Activated T-helper 1 cell treated with anti-CD3 and anti-CD28 coated beads, Interleukin-12 subunit alpha, Interleukin-12 subunit beta, Interleukin-2, Interleukin-4 antibody, amounts not matched to agents 30 ng/mL and 10 ng/mL and 1 ng/mL, durations not matched to agents 14 hours and 24 hours and 36 hours (primary cell): ENCODE measurements at regions of chr20 and their contacts with region 1.

Region 1: DNA sequence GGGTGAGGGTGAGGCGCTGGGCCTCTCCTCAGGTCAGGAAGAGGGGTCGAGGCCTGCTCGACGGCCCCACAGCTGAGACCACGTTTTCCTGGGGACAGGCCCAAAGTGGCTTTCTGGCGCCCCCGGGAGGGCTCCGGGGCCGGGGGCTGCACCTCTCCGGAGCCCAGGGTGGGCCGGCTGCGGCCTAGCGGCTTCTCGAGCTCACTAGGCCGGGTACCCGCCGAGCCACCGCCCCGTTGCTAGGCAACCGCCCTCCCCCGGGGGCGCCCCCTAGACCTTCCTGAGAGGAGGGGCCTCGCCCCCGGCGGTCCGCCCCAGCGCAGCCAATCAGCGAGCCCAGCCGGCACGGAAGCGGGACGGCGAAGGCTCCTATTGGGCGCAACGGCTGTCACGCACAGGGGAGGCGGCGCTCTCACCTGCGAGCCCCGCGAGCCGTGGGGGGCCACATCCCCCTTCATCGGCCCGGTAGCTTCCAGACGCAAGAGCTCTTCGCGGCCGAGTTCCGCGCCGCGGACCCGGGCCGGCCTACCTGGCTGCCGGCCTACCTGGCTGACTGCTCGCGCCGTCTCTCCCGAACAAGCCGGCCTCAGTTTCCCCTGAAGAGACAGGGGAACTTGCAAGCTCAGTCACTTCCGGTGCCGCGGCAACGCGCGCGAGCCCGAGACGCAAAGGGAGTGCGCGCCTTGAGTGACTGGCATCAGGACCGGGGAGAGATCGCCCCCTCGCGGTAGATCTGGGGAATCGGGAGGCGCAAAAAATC is 831 bp upstream of the BCL2L1 start:
- DNase-seq: peak; percentile 97
- H3K4me3 Mint-ChIP-seq: peak overlapping the region; percentile 97
- H3K27ac Mint-ChIP-seq: peak overlapping the region; percentile 93
- H3K4me1 Mint-ChIP-seq: peaks cover 20% of the 10 kb centered on the region
- H3K27me3 Mint-ChIP-seq: no peaks in the 10 kb centered on the region

Region 2: DNA sequence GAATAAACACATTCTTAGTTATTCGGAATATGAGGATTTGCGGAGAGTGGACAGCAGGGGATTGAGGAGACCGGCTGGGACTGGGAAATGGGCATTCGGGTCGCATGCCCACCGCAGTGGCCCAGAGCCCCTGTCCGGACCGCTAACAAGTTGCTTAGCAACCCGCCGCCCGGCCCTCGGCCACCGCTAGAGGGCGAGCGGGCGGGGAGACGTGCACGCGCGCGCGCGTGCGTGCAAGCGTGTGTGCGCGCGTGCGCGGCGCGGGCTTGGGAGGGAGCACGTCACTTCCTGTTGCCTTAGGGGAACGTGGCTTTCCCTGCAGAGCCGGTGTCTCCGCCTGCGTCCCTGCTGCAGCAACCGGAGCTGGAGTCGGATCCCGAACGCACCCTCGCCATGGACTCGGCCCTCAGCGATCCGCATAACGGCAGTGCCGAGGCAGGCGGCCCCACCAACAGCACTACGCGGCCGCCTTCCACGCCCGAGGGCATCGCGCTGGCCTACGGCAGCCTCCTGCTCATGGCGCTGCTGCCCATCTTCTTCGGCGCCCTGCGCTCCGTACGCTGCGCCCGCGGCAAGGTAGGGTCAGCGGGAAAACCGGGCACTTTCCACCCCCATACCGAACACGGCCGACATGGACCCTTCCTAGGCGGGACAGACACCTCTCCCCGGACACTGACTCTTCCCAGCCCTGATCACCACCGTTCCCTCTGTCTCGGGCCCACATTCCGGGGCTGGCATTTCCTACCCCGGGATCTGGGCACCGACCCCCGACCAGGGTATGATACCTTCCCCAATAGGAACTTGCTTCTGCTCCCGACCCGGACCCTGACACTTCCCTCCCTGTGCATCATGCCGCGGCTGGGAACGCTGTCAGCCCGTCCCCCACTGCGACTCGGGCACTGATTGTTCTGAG is 209.1 kb before region 1 on chr20 and contains the start of gene HM13:
- intact Hi-C with region 1: loop called (anchors 1 kb)
- DNase-seq: peak; percentile 86
- H3K4me3 Mint-ChIP-seq: peak within 1 kb of the TSS; percentile 48
- H3K27ac Mint-ChIP-seq: peak within 1 kb of the TSS; percentile 24
- H3K4me1 Mint-ChIP-seq: peaks cover 7% of the 10 kb centered on the region
- H3K27me3 Mint-ChIP-seq: peaks cover 2% of the 10 kb centered on the region
- total RNA-seq, gene HM13: 215 and 228 TPM in 2 replicates

Region 3: DNA sequence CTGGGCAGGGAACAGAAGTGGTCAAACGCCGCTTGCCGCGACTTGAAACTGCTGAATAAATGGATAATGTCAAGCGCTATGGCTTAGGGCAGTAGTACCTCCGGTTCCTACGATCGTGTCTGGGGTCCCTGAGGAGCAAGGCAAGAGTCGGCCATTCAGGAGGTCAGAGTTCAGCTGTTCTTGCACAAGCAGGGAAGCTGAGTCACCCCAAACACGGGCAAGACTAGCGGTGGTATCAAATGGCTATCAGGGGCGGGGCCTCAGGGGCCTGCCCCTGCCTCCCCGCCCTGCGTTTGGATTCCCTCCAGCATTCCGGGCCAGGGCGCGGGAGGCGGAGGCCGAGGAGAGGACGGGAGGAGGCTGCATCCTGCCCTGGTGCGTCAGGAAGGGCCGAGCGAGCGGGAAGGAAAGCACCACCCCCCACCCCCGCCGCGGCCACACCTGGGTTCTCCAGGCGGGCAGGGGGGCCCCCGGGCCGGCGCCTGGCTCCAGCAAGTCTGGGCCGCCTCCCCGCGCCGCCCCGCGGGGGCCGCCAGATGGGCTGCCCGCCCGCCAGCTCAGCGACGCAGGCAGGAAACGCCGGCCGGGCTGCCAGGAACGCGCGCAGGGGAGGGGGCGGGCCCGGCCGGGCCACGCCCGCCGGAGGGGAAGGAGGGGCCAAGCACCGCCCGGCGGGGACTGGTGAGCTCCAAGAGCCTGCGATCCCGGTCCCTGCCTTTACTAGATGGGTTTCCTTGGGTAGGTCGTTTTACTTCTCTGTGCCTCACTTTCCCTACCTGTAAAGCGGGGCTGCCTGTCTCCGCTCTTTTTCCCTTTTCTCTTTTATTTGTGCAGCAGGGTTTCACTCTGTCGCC is 150.6 kb before region 1 on chr20:
- intact Hi-C with region 1: loop called (anchors 2 kb)
- DNase-seq: peak; percentile 80
- H3K4me3 Mint-ChIP-seq: peak overlapping the region; percentile 88
- H3K27ac Mint-ChIP-seq: peak overlapping the region; percentile 88
- H3K4me1 Mint-ChIP-seq: peaks cover 20% of the 10 kb centered on the region
- H3K27me3 Mint-ChIP-seq: no peaks in the 10 kb centered on the region

Region 4: DNA sequence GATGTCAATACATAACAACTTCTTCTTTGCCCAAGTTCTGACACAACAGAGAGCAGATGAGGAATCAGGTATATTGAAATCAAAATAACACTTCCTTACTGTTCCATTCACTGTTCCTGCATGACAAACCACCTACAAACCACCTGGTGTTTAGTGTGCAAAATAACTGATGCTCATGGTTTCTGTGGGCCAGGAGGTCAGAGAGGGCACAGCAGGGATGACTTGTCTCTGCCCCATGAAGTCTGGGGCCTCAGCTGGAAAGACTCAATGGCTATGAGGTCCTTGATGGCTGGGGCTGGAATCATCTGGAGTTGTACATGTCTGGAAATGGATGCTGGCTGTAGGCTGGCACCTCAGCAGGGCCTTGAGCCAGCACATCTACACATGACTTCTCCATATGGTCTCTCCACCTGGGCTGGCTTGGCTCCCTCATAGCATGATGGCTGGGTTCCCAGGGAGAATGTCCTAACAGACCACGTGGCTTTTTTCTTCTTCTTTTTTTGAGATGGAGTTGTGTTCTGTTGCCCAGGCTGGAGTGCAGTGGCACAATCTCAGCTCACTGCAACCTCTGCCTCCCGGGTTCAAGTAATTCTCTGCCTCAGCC is 93.2 kb before region 1 on chr20:
- intact Hi-C with region 1: loop called (anchors 1 kb)
- DNase-seq: no peak
- H3K4me3 Mint-ChIP-seq: no peak overlapping the region
- H3K27ac Mint-ChIP-seq: no peak overlapping the region
- H3K4me1 Mint-ChIP-seq: no peaks in the 10 kb centered on the region
- H3K27me3 Mint-ChIP-seq: peaks cover 3% of the 10 kb centered on the region

Region 5: DNA sequence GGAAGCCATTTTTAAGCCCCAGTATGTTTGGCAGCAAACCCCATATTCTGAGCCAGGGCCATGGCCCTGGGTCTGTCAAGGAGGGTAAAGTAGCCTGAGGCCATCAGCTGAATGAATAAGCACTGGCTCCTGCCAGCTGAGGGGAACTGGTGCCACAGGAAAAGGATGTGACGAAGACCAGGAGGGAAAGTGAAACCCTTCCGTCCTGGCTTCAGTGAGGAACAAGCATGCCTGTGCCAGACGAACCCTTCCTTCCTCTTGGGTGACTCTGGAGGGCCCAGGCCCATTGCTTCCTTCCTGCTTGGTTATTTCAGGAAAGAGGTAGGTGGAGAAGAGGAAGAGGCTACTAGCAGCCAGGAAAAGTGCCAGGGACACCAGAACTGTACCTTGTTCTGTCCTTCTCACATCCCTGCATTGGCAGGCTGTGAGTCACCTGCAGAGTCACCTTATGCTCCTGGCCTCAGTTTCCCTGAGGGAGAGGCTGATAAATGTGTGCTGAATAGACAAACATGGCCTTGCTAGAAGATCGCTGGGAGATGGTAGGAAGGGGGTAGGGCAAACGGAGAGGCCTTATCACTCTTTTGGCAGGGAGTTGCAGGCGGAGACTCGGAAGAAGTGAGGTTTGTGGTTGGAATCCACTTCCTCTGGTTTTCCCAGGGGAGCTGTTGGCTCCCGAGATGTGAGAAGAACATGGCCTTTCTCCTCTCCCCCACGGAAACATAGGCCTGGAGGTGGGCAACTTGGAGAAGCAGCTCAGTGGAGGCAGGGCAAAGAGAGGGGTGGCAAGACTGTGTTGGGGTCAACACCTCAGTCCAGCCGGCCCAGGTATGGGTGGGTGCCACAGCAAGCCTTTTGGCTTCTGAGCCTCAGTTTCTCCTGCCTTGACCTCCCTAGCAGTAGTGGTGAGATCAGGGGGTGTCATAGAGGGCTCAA is 48.3 kb before region 1 on chr20:
- intact Hi-C with region 1: loop called (anchors 1 kb)
- DNase-seq: peak; percentile 71
- H3K4me3 Mint-ChIP-seq: peak overlapping the region; percentile 86
- H3K27ac Mint-ChIP-seq: peak overlapping the region; percentile 90
- H3K4me1 Mint-ChIP-seq: peaks cover 89% of the 10 kb centered on the region
- H3K27me3 Mint-ChIP-seq: no peaks in the 10 kb centered on the region

Region 6: GRCh38 chr20:31738729-31739561 is 15.4 kb after region 1 on chr20 and contains the start of gene TPX2:
- intact Hi-C with region 1: loop called (anchors 1 kb)
- DNase-seq: peak; percentile 83
- H3K4me3 Mint-ChIP-seq: no peak within 1 kb of the TSS
- H3K27ac Mint-ChIP-seq: no peak within 1 kb of the TSS
- H3K4me1 Mint-ChIP-seq: peaks cover 5% of the 10 kb centered on the region
- H3K27me3 Mint-ChIP-seq: no peaks in the 10 kb centered on the region
- total RNA-seq, gene TPX2: 53.3 and 54.4 TPM in 2 replicates

Region 7: DNA sequence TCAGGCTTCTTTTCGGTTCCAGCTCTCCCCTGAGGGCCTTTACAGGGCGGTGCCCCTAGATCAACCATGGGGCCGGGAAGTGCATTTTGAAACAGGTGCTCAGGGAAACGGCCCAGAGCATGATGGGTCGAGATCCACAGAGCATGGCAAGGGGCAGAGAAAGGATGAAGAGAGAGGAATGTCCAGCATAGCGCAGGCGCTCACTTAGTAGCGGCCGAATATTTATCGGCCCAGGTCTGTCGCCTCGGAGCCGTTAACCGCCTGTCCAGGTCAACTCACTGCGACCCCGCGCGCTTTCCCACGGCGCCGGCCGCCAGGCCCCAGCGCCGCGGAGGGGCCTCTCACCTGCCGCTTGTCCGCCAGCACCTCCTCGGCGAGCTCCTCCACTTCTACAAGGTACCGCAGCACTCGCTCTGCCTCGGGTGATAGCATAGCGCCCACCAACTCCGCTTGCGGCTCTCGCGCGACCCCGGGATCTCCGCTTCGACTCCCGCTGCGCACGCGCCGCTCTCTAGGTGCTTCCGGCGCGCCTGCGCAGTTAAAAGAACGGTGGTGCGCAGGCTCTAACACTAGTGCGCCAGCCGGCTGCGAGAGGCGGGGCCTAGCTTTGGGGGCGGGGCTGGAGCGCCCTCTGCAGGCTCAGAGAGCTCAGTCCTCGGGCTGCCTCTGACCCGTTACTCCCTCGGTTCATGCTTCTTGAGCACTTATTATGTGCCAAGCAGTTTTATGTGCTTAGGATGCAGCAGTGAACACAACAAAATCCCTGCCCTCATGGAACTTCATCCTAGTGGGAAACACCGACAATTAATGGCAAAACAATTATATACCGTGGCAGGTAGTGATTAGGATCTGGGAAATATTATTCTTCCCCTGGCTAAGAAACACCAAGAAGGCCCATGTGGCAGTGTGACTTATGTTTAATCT is 228.3 kb after region 1 on chr20 and contains the start of gene PDRG1:
- intact Hi-C with region 1: loop called (anchors 5 kb)
- DNase-seq: peak; percentile 96
- H3K4me3 Mint-ChIP-seq: peak within 1 kb of the TSS; percentile 97
- H3K27ac Mint-ChIP-seq: peak within 1 kb of the TSS; percentile 95
- H3K4me1 Mint-ChIP-seq: peaks cover 28% of the 10 kb centered on the region
- H3K27me3 Mint-ChIP-seq: peaks cover 8% of the 10 kb centered on the region
- total RNA-seq, gene PDRG1: 20.0 and 20.5 TPM in 2 replicates